A673 (cell line): ENCODE measurements at regions of chr1 and their contacts with region 1.

Region 1: GRCh38 chr1:161045750-161046571 is at the start of gene USF1:
- DNase-seq: peak; percentile 98
- H3K4me3 ChIP-seq: peak within 1 kb of the TSS; percentile 70
- H3K27ac ChIP-seq: peak within 1 kb of the TSS; percentile 85
- H3K4me1 ChIP-seq: no peaks in the 10 kb centered on the region
- H3K27me3 ChIP-seq: no peaks in the 10 kb centered on the region
- CTCF ChIP-seq: no peak
- total RNA-seq, gene USF1: 54.5 and 57.9 TPM in 2 replicates

Region 2: DNA sequence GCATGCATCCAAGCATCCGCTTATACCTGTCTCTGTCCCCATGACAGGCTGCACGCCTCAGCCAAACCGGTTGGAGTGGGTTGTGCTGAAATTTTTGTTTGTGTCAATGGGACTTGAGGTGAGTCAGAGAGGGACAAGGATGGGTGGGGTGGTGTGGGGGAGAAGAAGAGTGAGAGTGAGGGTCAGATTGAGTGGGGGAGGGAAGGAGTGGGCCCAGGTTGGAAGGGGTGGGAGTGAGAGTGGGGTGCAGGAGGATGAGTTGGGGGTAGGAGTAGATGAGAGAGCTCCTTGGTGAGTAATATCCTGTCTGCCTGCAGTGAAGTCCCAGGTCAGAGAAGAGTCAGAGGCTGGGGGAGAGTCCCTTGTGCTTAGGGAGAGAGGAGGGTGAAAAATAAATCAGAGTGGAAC is 46.7 kb after region 1 on chr1:
- CTCF ChIA-PET with region 1: interaction called, 4 read pairs
- POLR2A ChIA-PET with region 1: interaction called, 6 read pairs
- intact Hi-C with region 1: loop called (anchors 5 kb)
- DNase-seq: no peak
- H3K4me3 ChIP-seq: no peak overlapping the region
- H3K27ac ChIP-seq: no peak overlapping the region
- H3K4me1 ChIP-seq: no peaks in the 10 kb centered on the region
- H3K27me3 ChIP-seq: peaks cover 3% of the 10 kb centered on the region
- CTCF ChIP-seq: no peak

Region 3: GRCh38 chr1:161440312-161440894 is 394.4 kb after region 1 on chr1:
- CTCF ChIA-PET with region 1: no interaction called
- POLR2A ChIA-PET with region 1: no interaction called
- intact Hi-C with region 1: no loop called
- DNase-seq: peak; percentile 80
- H3K4me3 ChIP-seq: peak overlapping the region; percentile 97
- H3K27ac ChIP-seq: peak overlapping the region; percentile 84
- H3K4me1 ChIP-seq: no peaks in the 10 kb centered on the region
- H3K27me3 ChIP-seq: no peaks in the 10 kb centered on the region
- CTCF ChIP-seq: peak; percentile 72